Posterior cingulate gyrus (tissue), 11 donors: ENCODE measurements at regions of chr5 and their contacts with region 1.

Region 1: DNA sequence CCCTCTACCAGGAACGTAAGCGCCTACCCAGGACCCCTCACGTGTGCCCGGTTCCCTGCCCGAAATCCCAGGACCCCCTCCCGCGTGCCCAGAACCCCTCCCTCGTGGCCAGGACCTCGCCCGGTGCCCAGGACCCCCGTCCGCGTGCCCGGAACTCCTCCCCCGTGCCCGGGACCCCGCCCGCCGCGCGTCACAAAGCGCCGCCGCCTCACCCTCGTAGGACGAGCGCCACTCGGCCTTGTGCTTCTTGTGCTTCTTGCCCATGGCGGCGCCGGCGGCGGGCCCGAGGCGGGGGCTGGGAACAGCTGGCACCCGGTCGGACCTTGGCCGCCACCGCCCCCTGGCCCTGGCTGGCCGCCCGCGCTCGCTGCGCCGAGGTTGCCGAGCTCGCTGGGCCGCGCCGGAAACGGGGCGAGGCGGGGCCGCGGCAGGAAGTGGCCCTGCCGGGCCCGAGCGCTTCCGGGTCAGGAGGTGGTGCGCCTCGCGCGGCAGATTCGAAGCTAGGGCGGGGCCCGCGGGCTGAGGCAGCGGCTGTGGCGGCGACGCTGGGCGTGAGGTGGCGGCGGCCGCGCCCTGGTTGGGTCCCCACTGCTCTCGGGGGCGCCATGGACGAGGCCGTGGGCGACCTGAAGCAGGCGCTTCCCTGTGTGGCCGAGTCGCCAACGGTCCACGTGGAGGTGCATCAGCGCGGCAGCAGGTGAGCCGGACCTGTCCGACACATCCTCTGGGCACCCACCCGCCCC is at the starts of genes BRD9 and TRIP13:
- DNase-seq: peak; percentile 71 to 98 (median 82)

Region 2: DNA sequence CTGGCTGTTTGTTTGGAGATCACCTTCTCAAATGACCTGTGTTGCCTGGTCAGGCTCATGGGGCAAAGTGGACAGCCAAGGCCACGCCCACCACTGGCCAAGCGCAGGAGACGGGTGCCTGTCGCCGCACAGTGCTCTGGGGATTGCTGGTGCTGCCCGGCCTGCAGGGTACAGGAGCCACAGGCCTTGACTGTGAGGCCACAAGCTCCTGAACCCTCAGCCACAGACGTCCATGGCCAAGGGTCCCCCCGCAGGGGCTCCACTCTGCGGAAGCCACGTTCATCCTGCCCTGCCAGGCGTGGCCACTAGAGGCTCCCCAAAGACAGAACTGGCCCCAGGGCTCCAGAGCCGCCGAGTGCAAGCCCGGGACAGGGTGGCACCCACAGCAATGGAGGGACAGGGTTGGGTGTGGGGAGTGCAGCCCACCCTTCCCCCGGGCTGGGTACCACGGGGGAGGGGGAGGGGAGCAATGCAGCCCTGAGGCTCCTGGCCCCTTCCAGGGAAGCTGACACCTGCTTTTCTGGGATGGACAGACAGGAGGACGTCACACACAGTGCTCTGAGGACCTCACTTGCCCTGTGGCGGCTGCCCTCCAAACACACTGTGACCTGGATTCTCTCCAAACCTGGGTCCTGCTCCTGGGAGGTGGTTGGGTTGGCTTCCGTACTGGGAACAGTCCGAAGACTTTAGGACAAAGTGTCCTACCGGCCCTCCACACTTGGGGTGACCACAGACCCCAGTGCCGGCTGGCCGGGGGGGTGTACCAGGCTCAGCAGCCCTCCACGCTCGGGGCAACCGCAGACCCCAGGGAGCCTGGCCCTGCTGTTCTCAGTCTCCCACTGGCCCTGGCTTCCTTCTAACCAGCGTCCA is 220.9 kb before region 1 on chr5:
- intact Hi-C with region 1: loop called (anchors 2 kb)
- DNase-seq: peak; percentile 71 to 98 (median 85)